ENCODE measurements at regions of chr2 and their contacts with region 1.

Region 1: DNA sequence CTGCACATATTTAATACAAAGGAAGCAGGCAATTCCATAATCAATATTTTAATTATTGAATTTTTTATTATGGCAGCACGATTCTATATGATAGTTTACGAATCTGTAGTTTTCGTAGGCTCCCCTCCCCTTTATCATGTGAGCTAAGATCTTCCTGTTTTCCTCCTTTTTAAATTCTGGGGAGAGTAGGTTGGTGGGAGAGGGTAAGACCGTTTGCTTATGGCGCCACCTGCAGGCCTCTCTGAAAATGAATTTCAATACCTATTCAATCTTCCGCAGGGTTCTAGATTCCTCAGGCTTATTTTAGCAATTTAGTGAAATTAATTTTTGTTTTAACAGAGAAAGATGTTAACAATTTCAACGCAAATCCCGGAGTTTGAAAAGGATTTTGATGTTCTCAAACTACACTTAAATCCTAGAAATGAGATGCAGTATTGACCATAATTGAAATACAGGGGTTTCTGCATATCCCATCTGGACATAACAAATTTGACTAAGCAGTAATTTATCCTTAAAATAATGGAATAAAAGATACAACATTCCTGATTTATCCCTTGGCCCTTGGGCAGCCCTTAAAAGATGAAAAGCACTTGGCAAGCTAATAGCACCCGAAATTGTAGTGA is 12.8 kb upstream of the GBX2 start:
- DNase-seq: peak; percentile 85
- H3K4me3 ChIP-seq: no peak overlapping the region
- H3K27ac ChIP-seq: no peak overlapping the region
- H3K4me1 ChIP-seq: peaks cover 24% of the 10 kb centered on the region
- H3K27me3 ChIP-seq: peaks cover 44% of the 10 kb centered on the region
- CTCF ChIP-seq: peak; percentile 86

Region 2: GRCh38 chr2:235766278-235766677 is 414.7 kb before region 1 on chr2:
- CTCF ChIA-PET with region 1: interaction called, 13 read pairs
- POLR2A ChIA-PET with region 1: no interaction called
- intact Hi-C with region 1: no loop called
- DNase-seq: peak; percentile 84
- H3K4me3 ChIP-seq: no peak overlapping the region
- H3K27ac ChIP-seq: no peak overlapping the region
- H3K4me1 ChIP-seq: no peaks in the 10 kb centered on the region
- H3K27me3 ChIP-seq: no peaks in the 10 kb centered on the region
- CTCF ChIP-seq: peak; percentile 84

Region 3: GRCh38 chr2:235779444-235779896 is 401.5 kb before region 1 on chr2:
- CTCF ChIA-PET with region 1: interaction called, 30 read pairs
- POLR2A ChIA-PET with region 1: no interaction called
- intact Hi-C with region 1: loop called (anchors 1 kb)
- DNase-seq: peak; percentile 68
- H3K4me3 ChIP-seq: no peak overlapping the region
- H3K27ac ChIP-seq: no peak overlapping the region
- H3K4me1 ChIP-seq: no peaks in the 10 kb centered on the region
- H3K27me3 ChIP-seq: no peaks in the 10 kb centered on the region
- CTCF ChIP-seq: peak; percentile 90

Region 4: GRCh38 chr2:235793163-235793752 is 387.7 kb before region 1 on chr2:
- CTCF ChIA-PET with region 1: no interaction called
- POLR2A ChIA-PET with region 1: no interaction called
- intact Hi-C with region 1: loop called (anchors 5 kb)
- DNase-seq: peak; percentile 21
- H3K4me3 ChIP-seq: no peak overlapping the region
- H3K27ac ChIP-seq: no peak overlapping the region
- H3K4me1 ChIP-seq: no peaks in the 10 kb centered on the region
- H3K27me3 ChIP-seq: no peaks in the 10 kb centered on the region
- CTCF ChIP-seq: peak; percentile 61

Region 5: GRCh38 chr2:235864733-235865515 is 316.0 kb before region 1 on chr2:
- CTCF ChIA-PET with region 1: interaction called, 5 read pairs
- POLR2A ChIA-PET with region 1: interaction called, 7 read pairs
- intact Hi-C with region 1: loop called (anchors 5 kb)
- DNase-seq: no peak
- H3K4me3 ChIP-seq: no peak overlapping the region
- H3K27ac ChIP-seq: no peak overlapping the region
- H3K4me1 ChIP-seq: peaks cover 16% of the 10 kb centered on the region
- H3K27me3 ChIP-seq: no peaks in the 10 kb centered on the region
- CTCF ChIP-seq: no peak

Region 6: GRCh38 chr2:236089271-236090026 is 91.5 kb before region 1 on chr2:
- CTCF ChIA-PET with region 1: interaction called, 4 read pairs
- POLR2A ChIA-PET with region 1: no interaction called
- intact Hi-C with region 1: loop called (anchors 5 kb)
- DNase-seq: peak; percentile 22
- H3K4me3 ChIP-seq: no peak overlapping the region
- H3K27ac ChIP-seq: no peak overlapping the region
- H3K4me1 ChIP-seq: peaks cover 47% of the 10 kb centered on the region
- H3K27me3 ChIP-seq: no peaks in the 10 kb centered on the region
- CTCF ChIP-seq: no peak

Region 7: GRCh38 chr2:237060534-237061312 is 879.8 kb after region 1 on chr2:
- CTCF ChIA-PET with region 1: no interaction called
- POLR2A ChIA-PET with region 1: no interaction called
- intact Hi-C with region 1: loop called (anchors 10 kb)
- DNase-seq: peak; percentile 67
- H3K4me3 ChIP-seq: no peak overlapping the region
- H3K27ac ChIP-seq: no peak overlapping the region
- H3K4me1 ChIP-seq: no peaks in the 10 kb centered on the region
- H3K27me3 ChIP-seq: no peaks in the 10 kb centered on the region
- CTCF ChIP-seq: peak; percentile 67

Measured in A673 (cell line).